Prostate gland (tissue), 2 donors: ENCODE measurements at regions of chr4 and their contacts with region 1.

Region 1: DNA sequence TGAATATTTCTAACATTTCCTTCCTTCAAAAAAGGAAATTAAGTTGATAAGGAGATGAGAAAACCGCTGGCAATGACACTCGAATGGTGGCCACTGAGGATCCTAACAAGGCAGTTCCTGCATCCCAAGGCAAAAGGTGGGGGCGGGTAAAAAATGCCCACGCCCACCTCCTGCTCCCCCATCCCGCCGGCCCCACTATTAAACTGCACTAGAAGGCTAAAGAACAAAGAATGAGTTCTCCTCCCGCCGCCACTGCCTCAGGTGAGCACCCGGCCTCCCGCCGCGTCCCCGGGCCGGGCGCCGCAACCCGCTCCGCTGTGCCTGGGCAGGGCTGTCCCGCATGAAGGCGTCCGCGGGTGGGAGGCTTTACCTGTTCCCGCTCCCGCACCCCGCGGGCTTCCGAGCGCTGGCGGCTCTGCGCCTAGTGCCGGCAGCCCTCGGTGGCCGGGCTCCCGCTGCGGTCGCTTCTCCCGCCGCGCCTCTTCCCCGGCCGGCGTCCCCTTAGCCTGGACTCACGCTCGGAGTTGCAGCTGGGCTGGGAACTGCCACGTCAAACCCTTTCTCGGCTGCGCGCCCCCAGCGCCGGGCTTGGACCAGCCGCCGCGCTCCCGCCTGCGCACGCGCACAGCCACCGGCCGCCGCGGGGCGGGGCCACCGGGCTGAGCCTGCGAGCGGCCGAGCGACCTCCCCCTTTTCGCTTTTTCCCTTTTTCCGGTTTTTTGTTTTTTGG is at the start of gene SEC24D:
- DNase-seq: peak; percentile 80
- H3K4me3 ChIP-seq: peak within 1 kb of the TSS; percentile 99
- H3K27ac ChIP-seq: peak within 1 kb of the TSS; percentile 96
- H3K4me1 ChIP-seq: no peaks in the 10 kb centered on the region
- H3K27me3 ChIP-seq: no peaks in the 10 kb centered on the region
- CTCF ChIP-seq: peak in 2 of 4 experiments; percentile 23
- POLR2A ChIP-seq: peak; percentile 89
- total RNA-seq, gene SEC24D: 31.5 to 34.9 TPM

Region 2: DNA sequence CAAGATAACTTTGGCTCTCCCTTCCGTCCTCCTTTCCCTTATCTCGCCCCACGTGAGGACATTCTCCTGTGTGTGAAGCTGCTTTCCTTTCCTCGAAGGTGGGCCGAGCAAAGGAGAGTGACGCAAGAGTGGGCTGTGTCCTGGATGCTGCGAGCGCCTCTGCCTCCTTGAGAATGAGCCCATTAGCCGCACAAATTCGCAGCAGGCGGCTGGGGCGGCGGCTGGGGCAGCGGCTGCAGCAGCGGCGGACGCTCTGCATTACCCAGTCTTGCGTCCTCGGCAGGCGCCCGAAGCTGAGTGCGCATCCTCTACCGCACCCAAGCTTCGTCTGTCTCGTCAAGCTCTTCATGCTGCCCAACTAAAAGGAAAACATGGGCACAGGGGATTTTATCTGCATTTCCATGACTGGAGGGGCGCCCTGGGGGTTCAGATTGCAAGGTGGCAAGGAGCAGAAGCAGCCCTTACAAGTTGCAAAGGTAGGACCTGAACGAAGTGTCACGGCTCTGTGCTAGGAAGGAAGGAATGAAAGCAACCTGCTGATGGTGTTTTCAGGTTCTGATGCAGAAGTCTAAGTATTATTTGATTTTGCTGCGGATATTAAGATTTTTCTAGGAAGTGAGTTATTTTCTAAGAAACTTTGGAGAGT is 53.1 kb after region 1 on chr4 and contains the start of gene SYNPO2:
- intact Hi-C with region 1: loop called (anchors 5 kb)
- DNase-seq: peak; percentile 79
- H3K4me3 ChIP-seq: peak within 1 kb of the TSS; percentile 26 to 37
- H3K27ac ChIP-seq: peak within 1 kb of the TSS; percentile 41 to 78
- H3K4me1 ChIP-seq: no peaks in the 10 kb centered on the region
- H3K27me3 ChIP-seq: no peaks in the 10 kb centered on the region
- CTCF ChIP-seq: peak in 1 of 4 experiments; percentile 1
- POLR2A ChIP-seq: peak; percentile 76
- total RNA-seq, gene SYNPO2: 131 to 181 TPM